ENCODE measurements at regions of chr11 and their contacts with region 1.

Region 1: DNA sequence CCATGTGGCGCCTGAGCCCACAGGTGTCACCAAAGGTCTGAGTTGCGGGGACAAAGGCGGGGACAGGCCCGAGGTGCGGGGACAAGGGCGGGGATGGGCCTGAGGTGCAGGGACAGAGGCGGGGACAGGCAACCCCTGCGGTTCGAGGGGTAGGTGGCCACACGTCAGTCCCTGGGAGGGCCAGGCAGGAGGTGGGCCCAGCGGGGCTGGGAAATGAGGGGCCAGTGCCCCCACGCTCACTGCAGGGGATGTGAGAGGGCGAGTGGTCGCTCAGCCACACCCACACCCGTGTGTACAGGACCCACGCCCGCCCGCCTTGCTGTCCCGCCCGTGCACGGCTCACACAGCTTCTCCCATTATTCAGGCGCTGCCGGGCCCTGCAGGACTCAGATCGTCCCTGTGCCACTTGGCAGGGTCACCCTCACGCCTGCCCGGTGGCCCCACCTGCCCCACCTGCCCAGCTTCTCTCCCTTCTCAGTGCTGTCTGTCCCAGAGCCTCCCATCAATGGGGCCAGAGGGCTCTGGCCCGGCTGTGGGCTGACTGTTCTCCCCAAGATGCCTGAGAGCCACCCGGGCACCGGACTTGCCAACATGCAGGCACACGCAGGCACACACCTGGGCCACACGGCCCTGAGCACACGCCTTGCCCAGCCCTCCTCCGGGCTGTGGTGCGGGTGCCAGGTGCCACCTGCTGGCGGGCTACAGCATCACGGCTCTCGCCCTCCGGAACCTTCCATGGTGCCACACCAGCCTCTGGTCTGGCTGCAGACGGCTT is 14.2 kb upstream of the MUC6 start:
- DNase-seq: peak; percentile 78
- H3K4me3 ChIP-seq: no peak overlapping the region
- H3K27ac ChIP-seq: no peak overlapping the region
- H3K4me1 ChIP-seq: peaks cover 23% of the 10 kb centered on the region
- H3K27me3 ChIP-seq: no peaks in the 10 kb centered on the region
- CTCF ChIP-seq: peak; percentile 91 to 99 (median 96)
- POLR2A ChIP-seq: no peak

Region 2: DNA sequence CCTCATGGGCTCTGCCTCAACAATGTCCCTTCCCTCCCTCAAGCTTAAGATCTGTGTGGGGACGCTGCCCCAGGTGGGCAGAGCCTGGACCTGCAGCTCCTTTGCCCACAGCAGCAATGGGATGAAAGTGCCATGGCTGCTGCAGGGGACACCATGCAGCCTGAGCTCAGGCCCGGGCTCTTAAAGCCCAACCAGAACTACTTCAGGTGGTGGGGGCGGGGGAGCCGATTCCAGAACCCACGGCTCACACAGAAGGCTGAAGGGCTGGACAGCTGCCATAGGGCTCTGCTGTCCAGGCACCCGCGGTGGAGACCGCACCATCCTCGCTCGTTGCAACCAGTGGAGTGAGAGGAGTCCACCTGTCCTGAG is 152.6 kb before region 1 on chr11:
- intact Hi-C with region 1: loop called (anchors 5 kb)
- DNase-seq: no peak
- H3K4me3 ChIP-seq: no peak overlapping the region
- H3K27ac ChIP-seq: no peak overlapping the region
- H3K4me1 ChIP-seq: no peaks in the 10 kb centered on the region
- H3K27me3 ChIP-seq: no peaks in the 10 kb centered on the region
- CTCF ChIP-seq: peak in 1 of 4 experiments; percentile 7
- POLR2A ChIP-seq: no peak

Measured in prostate gland (tissue), 2 donors.